A673 (cell line): ENCODE measurements at regions of chr6 and their contacts with region 1.

Region 1: DNA sequence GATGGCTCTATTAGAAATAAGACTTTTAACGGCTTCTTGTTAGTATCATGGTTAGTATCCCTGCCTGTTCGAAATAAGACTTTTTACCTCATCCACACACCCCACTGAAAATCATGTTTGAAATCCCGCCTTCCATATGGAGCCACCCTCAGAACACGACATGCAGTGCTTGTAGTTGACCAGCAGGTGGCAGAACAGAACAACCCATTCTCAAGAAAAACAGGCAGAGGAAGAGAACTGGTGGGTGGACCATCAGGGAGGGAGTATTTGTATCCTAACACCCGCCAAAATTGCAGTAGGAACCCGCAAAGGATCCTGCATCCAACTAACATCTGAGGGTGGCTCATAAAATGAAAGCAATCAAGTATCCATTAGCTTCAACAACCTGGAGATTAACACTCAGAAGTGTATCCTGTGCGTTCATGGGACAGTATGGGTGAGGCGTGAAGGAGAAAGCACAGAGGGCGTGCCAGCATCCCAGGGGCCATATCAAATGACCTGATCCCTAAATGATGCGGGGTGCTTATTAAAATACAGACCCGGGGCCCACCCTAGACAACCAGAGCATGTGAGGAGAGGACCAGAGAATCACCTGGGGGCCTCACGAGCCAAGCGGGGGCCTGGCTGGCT is 89.6 kb upstream of the NHSL1 start:
- DNase-seq: peak; percentile 89
- H3K4me3 ChIP-seq: no peak overlapping the region
- H3K27ac ChIP-seq: no peak overlapping the region
- H3K4me1 ChIP-seq: peaks cover 14% of the 10 kb centered on the region
- H3K27me3 ChIP-seq: no peaks in the 10 kb centered on the region
- CTCF ChIP-seq: peak; percentile 92

Region 2: GRCh38 chr6:138428944-138429598 is 159.8 kb before region 1 on chr6:
- CTCF ChIA-PET with region 1: no interaction called
- POLR2A ChIA-PET with region 1: no interaction called
- intact Hi-C with region 1: loop called (anchors 1 kb)
- DNase-seq: peak; percentile 70
- H3K4me3 ChIP-seq: no peak overlapping the region
- H3K27ac ChIP-seq: no peak overlapping the region
- H3K4me1 ChIP-seq: no peaks in the 10 kb centered on the region
- H3K27me3 ChIP-seq: no peaks in the 10 kb centered on the region
- CTCF ChIP-seq: peak; percentile 74

Region 3: GRCh38 chr6:138692058-138692977 is 103.4 kb after region 1 on chr6:
- CTCF ChIA-PET with region 1: no interaction called
- POLR2A ChIA-PET with region 1: no interaction called
- intact Hi-C with region 1: loop called (anchors 2 kb)
- DNase-seq: peak; percentile 71
- H3K4me3 ChIP-seq: peak overlapping the region; percentile 97
- H3K27ac ChIP-seq: peak overlapping the region; percentile 93
- H3K4me1 ChIP-seq: no peaks in the 10 kb centered on the region
- H3K27me3 ChIP-seq: no peaks in the 10 kb centered on the region
- CTCF ChIP-seq: peak; percentile 78

Region 4: GRCh38 chr6:139003751-139004150 is 414.8 kb after region 1 on chr6:
- CTCF ChIA-PET with region 1: no interaction called
- POLR2A ChIA-PET with region 1: no interaction called
- intact Hi-C with region 1: no loop called
- DNase-seq: no peak
- H3K4me3 ChIP-seq: no peak overlapping the region
- H3K27ac ChIP-seq: no peak overlapping the region
- H3K4me1 ChIP-seq: no peaks in the 10 kb centered on the region
- H3K27me3 ChIP-seq: no peaks in the 10 kb centered on the region
- CTCF ChIP-seq: no peak

Region 5: GRCh38 chr6:139369568-139370282 is 780.8 kb after region 1 on chr6:
- CTCF ChIA-PET with region 1: no interaction called
- POLR2A ChIA-PET with region 1: no interaction called
- intact Hi-C with region 1: loop called (anchors 5 kb)
- DNase-seq: peak; percentile 86
- H3K4me3 ChIP-seq: peak overlapping the region; percentile 87
- H3K27ac ChIP-seq: peak overlapping the region; percentile 96
- H3K4me1 ChIP-seq: peaks cover 43% of the 10 kb centered on the region
- H3K27me3 ChIP-seq: no peaks in the 10 kb centered on the region
- CTCF ChIP-seq: peak; percentile 76